PC-9 (cell line): ENCODE measurements at regions of chr17 and their contacts with region 1.

Region 1: DNA sequence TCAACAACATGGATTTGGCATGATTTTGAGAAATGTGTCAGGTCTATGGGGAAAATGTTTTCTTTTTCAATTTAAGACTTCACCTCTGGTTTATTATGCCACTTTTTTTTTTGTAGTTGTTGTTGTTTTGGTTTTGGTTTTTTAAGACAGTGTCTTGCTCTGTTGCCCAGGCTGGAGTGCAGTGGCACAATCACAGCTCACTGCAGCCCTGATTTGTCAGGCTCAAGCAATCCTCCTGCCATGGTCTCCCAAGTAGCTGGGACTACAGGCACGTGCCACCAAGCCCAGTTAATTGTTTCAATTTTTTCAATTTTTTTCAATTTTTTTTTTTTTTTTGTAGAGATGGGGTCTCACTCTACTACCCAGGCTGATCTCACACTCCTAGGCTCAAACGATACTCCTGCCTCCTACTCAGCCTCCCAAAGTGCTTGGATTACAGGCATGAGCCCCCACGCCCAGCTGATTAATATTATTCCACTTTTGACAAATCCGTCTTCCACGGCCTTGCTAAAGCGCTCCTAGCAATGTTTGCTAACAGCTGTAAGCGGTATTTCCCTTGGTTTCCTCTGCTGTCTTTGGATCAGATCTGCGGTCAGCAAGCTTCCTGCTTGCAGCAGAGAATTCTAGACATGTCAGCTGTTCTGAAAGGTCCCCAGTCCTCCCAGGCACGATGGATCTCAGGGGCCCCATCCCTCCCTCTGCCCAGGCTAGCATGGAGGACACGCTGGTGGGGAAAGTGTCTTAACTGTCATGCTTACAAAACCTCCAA is 7.0 kb upstream of the MILR1 start:
- DNase-seq: peak; percentile 38 to 65
- H3K4me3 ChIP-seq: no peak overlapping the region
- H3K27ac ChIP-seq: peak overlapping the region; percentile 88
- H3K4me1 ChIP-seq: peaks cover 40% of the 10 kb centered on the region
- H3K27me3 ChIP-seq: no peaks in the 10 kb centered on the region
- CTCF ChIP-seq: no peak

Region 2: DNA sequence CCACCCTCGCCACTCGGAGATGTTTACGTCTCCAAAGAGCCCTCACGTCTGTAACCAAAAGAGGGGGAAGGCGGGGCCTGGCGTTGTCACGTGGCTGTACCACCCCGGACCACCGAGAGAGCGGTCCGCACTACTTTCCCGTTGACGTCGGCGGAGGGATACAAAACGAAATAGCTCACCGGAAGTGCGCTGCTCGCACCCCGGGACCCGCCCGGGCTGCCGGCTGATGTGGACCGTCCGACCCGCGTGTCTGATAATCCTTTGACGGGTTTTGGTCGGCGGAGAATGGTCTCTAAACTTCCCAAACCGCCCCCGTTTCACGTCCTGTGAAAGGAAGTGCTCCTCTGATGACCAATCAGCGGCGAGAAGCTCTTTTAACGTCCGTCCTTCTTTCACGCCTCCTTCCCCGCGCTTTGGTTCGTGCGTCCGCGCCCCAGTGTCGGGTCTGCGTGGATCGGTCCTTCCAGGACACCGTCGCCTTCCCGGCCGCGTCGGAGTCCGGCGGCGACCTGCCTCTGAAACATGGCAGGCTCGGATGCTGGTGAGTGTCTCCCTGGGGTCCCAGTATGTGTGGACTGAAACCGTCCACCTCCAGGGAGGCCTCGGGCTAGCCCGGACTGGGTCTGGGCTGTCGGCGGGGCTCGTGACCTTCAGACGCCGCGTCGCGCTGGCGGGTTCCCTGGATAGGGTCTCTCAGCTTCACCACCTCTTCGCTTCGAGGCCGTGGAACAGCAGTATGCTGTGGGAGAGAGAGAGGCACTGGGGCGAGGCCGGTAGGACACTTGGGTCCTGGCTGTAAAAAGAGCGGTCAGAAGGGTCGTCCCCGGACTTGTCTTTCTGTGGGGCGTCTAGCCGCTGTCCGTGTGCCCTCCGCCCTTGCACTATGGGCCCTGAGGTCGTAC is 64.9 kb after region 1 on chr17 and contains the start of gene CEP95:
- CTCF ChIA-PET with region 1: no interaction called
- POLR2A ChIA-PET with region 1: interaction called, 4 read pairs
- intact Hi-C with region 1: loop called (anchors 2 kb)
- DNase-seq: peak in 1 of 2 experiments; percentile 80
- H3K4me3 ChIP-seq: peak within 1 kb of the TSS; percentile 100
- H3K27ac ChIP-seq: peak within 1 kb of the TSS; percentile 98
- H3K4me1 ChIP-seq: peaks cover 30% of the 10 kb centered on the region
- H3K27me3 ChIP-seq: no peaks in the 10 kb centered on the region
- CTCF ChIP-seq: no peak
- total RNA-seq, gene CEP95: 56.0 and 57.2 TPM in 2 replicates